Left cardiac atrium (tissue), 4 donors: ENCODE measurements at regions of chr11 and their contacts with region 1.

Region 1: GRCh38 chr11:1719781-1720180 is 22.8 kb downstream of the KRTAP5-6 start:
- DNase-seq: no peak
- ATAC-seq: no peak

Region 2: DNA sequence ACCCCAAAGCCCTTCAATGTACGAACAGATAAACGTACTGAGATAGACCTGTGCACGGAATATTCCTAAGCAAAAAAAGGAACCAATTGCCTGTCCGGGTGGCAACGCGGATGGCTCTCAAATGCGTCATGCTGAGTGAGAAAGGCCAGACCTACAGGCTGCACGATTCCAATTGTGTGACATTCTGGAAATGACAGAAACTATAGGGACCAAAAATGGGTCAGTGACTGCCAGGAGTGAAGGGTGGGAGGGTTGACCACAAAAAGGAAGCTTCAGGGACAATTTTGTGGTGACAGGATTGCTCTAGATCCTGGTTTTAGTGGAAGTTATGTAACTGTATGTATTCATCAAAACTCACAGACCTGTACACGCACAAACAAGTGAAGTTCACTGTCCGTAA is 91.0 kb after region 1 on chr11:
- intact Hi-C with region 1: loop called in 1 of 2 experiments (anchors 5 kb)
- DNase-seq: no peak
- ATAC-seq: no peak